ENCODE measurements at regions of chrX and their contacts with region 1.

Region 1: GRCh38 chrX:46978341-46979291 is 66.4 kb downstream of the JADE3 start:
- DNase-seq: peak; percentile 48 to 62
- ATAC-seq: peak in 5 of 8 donors; percentile 30 to 67 (median 57)
- H3K4me3 ChIP-seq: no peak overlapping the region
- H3K27ac ChIP-seq: peak overlapping the region in 1 of 10 donors; percentile 23
- H3K4me1 ChIP-seq: peaks cover 0 to 5% (median 0%) of the 10 kb centered on the region in 9 donors
- H3K27me3 ChIP-seq: peaks cover 0 to 26% (median 0%) of the 10 kb centered on the region in 7 donors
- CTCF ChIP-seq: peak; percentile 15 to 70 (median 60)

Region 2: DNA sequence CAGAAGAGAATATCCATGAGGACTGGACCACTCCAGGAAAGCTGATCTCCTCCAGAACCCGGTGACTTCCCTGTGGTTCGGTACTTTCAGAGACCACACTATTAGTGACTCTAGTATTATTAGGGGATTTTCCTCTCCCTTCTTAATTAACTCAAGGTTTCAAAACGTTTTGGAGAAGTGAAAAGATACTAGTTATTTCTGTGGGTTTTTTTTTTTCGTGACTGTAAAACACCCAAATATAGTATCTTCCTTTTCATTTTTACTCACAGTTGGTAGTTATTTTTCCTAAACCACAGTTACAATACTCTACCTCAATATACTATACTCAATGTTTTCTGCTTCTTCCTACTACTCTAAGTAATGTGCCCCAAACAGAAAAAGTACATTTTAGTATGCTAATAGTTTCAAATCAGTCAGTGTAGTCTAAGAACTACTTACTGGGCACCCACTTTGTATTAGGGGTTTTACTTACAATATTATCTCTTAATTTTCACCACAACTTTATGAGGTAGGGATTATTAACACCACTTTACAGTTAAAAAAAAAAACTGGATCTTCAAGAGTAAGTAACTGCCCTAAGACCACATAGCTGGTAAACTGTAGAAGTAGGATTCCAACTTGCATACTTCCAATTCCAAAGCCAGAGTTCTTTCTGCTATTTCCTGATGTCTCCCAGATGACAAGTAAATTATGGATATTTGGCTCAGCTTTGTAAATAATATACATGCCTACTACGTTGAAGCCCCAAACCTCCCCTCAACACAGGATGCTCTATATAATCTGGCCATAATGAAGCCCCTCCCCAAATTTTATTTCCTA is 264.7 kb before region 1 on chrX:
- intact Hi-C with region 1: no loop called
- DNase-seq: no peak
- ATAC-seq: no peak
- H3K4me3 ChIP-seq: no peak overlapping the region
- H3K27ac ChIP-seq: no peak overlapping the region
- H3K4me1 ChIP-seq: no peaks in the 10 kb centered on the region
- H3K27me3 ChIP-seq: peaks cover 0 to 26% (median 0%) of the 10 kb centered on the region in 7 donors
- CTCF ChIP-seq: no peak

Region 3: DNA sequence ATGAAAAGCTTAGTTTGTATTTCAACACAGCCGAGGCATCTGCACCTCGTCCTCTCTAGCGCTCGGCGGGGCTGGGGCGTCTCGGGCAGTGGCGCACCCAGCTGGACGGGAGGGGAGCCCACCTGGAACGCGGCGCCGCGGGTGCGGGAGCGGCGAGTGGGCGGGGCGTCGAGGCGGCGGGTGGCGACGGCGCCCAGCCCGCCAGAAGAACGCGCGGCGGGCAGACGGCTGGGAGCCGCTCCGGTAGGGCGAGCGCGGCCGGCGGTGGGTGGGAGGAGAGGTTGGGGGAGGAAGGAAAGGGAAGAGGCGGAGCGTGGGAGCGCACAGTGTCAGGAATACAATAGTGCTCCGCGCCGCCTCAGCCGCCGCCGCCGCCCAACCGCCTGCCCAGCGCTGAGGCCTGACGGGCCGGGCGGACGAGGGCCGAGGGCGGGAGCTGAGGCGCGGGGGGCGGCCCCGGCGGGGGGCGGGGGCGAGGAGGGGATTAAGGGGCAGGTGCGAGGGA is 66.5 kb before region 1 on chrX and contains the start of gene JADE3:
- intact Hi-C with region 1: loop called in 6 of 10 experiments (anchors 2 to 10 kb)
- DNase-seq: peak; percentile 73 to 80
- ATAC-seq: peak; percentile 91 to 96 (median 96)
- H3K4me3 ChIP-seq: peak within 1 kb of the TSS; percentile 41 to 78 (median 72)
- H3K27ac ChIP-seq: peak within 1 kb of the TSS; percentile 53 to 85 (median 78)
- H3K4me1 ChIP-seq: peaks cover 0 to 20% (median 4%) of the 10 kb centered on the region in 9 donors
- H3K27me3 ChIP-seq: peaks cover 0 to 70% (median 0%) of the 10 kb centered on the region in 7 donors
- CTCF ChIP-seq: peak in 1 of 9 donors; percentile 19
- total RNA-seq, gene JADE3: 4.5 to 8.7 (median 6.4) TPM

Region 4: GRCh38 chrX:47026198-47026597 is 47.6 kb after region 1 on chrX:
- intact Hi-C with region 1: no loop called
- DNase-seq: no peak
- ATAC-seq: no peak
- H3K4me3 ChIP-seq: no peak overlapping the region
- H3K27ac ChIP-seq: no peak overlapping the region
- H3K4me1 ChIP-seq: no peaks in the 10 kb centered on the region
- H3K27me3 ChIP-seq: peaks cover 0 to 54% (median 0%) of the 10 kb centered on the region in 7 donors
- CTCF ChIP-seq: no peak

Region 5: GRCh38 chrX:47078129-47079043 is 99.8 kb after region 1 on chrX and contains the start of gene RGN:
- intact Hi-C with region 1: no loop called
- DNase-seq: peak in 1 of 2 donors; percentile 50
- ATAC-seq: peak; percentile 55 to 82 (median 78)
- H3K4me3 ChIP-seq: peak within 1 kb of the TSS in 9 of 10 donors; percentile 40 to 59 (median 52)
- H3K27ac ChIP-seq: peak within 1 kb of the TSS in 9 of 10 donors; percentile 23 to 79 (median 68)
- H3K4me1 ChIP-seq: no peaks in the 10 kb centered on the region
- H3K27me3 ChIP-seq: peaks cover 0 to 38% (median 0%) of the 10 kb centered on the region in 7 donors
- CTCF ChIP-seq: no peak
- total RNA-seq, gene RGN: 15.8 to 29.2 (median 23.8) TPM